HepG2 (cell line): ENCODE measurements at regions of chr18 and their contacts with region 1.

Region 1: DNA sequence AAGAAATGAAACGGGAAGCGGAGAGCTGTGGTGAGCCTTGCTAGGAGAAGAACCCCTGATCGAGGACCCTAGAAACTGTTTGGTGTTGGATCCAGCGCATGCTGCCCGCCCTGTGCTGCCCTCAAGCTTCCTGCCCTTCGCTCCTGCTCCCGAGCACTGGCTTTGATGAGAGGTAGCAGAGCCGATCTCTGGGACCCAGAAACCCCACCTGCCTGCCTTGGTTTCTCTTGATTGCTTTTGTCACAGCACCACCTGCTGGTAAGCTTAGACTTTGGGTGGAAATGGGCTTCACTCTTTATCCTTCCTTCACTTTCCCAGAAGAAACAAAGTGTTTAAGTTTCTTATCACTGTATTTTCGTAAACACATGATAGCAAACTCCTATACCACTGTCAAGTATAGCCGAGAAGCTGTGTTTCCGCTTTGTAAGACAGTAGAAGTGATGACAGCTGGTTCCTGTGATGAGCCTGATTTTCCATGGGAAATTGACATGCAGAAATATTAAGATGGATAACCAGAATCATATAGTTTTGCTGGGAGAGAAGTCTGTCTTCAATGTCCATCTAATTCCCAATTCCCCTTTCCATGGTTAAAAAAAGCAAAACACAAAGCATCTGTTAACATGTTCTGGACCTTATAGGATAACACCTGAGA is 267.4 kb downstream of the PHLPP1 start:
- DNase-seq: peak; percentile 36
- ATAC-seq: peak; percentile 34
- H3K4me3 ChIP-seq: no peak overlapping the region
- H3K27ac ChIP-seq: no peak overlapping the region
- H3K4me1 ChIP-seq: peaks cover 5% of the 10 kb centered on the region; the same call in 1 of the 2 replicates
- H3K27me3 ChIP-seq: no peaks in the 10 kb centered on the region
- CTCF ChIP-seq: peak; percentile 85
- EP300 ChIP-seq: no peak
- POLR2A ChIP-seq: no peak
- RAD21 ChIP-seq: peak; percentile 53

Region 2: DNA sequence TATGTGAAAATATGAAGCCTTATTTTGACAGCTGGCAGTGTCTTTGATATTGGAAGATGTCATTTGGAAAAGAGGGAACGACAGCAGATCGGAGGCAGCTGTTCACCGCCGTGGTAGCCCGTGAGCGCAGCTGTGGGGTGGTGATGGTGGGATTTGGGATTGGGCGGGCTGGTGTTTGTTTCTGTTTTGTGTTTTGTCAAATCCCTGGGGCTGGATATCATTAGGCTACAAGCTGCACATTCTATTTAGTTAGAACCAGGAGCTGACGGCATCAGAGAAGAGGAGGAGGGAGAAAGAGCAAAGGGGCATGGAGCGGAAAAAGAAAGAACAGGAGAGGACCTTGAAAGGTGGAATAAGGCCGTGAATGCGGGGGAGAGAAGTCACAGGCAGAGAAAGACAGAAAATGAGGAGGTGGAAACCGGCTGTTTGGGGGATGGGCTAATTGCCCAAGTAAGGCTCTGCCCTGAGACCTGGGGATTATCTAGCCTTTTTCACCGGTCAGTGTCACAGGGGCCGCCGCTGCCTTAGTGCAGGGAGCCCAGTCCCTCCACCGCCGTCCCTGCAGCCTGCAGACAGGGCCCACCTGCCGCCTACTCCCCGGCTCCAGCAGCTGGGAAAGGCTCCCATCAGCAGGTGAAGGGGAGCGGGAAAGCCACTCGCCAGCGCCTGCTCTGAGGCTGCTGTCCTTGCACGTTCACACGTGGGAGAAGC is 371.9 kb before region 1 on chr18:
- CTCF ChIA-PET with region 1: no interaction called
- POLR2A ChIA-PET with region 1: no interaction called
- in situ Hi-C with region 1: loop called (anchors 25 kb)
- intact Hi-C with region 1: no loop called
- DNase-seq: no peak
- ATAC-seq: peak; percentile 57
- H3K4me3 ChIP-seq: peak overlapping the region in 1 of 3 experiments; percentile 48; a peak in 1 of 6 replicates
- H3K27ac ChIP-seq: no peak overlapping the region
- H3K4me1 ChIP-seq: peaks cover 33% of the 10 kb centered on the region
- H3K27me3 ChIP-seq: peaks cover 7 to 35% of the 10 kb centered on the region in 2 experiments; a peak in 4 of 5 replicates
- CTCF ChIP-seq: no peak
- EP300 ChIP-seq: no peak
- POLR2A ChIP-seq: no peak
- RAD21 ChIP-seq: no peak

Region 3: GRCh38 chr18:62637807-62638687 is 344.7 kb before region 1 on chr18:
- CTCF ChIA-PET with region 1: interaction called, 5 read pairs
- POLR2A ChIA-PET with region 1: no interaction called
- in situ Hi-C with region 1: no loop called
- intact Hi-C with region 1: loop called (anchors 1 kb)
- DNase-seq: peak; percentile 28
- ATAC-seq: peak; percentile 91
- H3K4me3 ChIP-seq: no peak overlapping the region
- H3K27ac ChIP-seq: no peak overlapping the region
- H3K4me1 ChIP-seq: peaks cover 22% of the 10 kb centered on the region
- H3K27me3 ChIP-seq: no peaks in the 10 kb centered on the region
- CTCF ChIP-seq: peak; percentile 70
- EP300 ChIP-seq: no peak
- POLR2A ChIP-seq: no peak
- RAD21 ChIP-seq: peak; percentile 65